CD8-positive, alpha-beta T cell (primary cell): ENCODE measurements at regions of chr6 and their contacts with region 1.

Region 1: DNA sequence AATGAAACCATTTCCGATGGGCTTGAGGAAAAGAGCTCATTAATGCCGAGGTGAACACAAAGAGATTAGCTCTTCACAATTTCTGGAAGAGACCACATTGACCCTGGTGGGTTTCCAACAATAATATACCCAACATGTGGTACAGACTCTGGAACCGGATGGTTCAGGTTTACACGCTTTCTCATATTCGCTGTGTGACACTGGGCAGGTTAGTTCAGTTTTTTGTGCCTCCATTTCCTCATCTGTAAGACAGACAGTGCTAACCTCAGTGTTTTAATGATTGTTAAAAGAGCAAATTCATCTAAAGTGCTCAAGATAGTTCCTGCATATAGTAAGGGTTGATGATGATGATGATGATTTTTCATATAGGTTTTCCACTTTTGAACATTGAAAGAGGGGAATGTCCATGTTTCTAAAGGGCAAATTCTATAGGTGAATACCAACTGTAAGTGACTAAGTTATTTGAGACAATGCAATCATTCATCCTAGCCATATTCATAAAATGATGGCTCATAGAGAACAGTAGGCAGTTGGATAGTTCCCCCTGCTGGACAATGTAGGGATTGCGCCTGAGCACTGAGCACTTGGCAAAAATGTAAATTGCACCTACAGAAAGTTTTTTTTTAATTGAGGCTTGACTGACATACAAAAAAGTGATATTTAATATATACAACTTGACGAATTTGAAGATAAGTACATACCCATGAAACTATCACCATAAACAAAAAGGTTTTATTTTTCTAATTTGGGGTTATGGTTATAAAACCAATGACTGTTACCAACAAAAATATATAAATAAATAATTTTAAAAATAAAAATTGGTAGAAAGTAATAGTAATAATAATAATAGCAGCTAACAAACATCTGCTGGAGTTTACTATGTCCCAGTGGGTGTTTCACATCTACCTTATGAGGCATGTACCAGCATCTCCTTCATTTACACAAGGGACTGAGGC is 2.1 kb upstream of the PERP start:
- DNase-seq: peak; percentile 61 to 85 (median 81)
- ATAC-seq: peak; percentile 71
- H3K4me3 ChIP-seq: no peak overlapping the region
- H3K4me3 Mint-ChIP-seq: no peak overlapping the region
- H3K27ac ChIP-seq: no peak overlapping the region
- H3K27ac Mint-ChIP-seq: no peak overlapping the region
- H3K4me1 ChIP-seq: peaks cover 9% of the 10 kb centered on the region
- H3K4me1 Mint-ChIP-seq: peaks cover 18% of the 10 kb centered on the region
- H3K27me3 ChIP-seq: peaks cover 5 to 7% of the 10 kb centered on the region in 2 experiments
- H3K27me3 Mint-ChIP-seq: peaks cover 25% of the 10 kb centered on the region
- CTCF ChIP-seq: peak; percentile 92

Region 2: DNA sequence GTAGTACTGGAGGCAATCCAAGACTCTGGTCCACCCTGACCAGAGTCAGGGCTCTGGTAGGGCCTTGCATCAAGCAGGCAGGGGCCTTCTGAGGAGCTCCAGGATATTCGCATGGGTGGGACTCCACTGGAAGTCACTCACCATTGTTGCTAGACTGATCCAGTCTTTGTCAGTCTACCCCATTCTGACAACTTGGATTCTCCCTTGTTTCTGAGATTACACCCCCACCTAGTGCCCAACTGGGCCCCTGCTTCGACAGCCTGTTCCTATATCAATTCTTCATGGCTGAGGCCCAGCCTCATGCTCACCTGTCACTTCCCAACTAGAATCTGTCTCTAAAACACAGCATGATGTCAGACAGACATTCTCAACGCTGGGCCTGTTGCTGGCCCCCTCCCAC is 1182.0 kb before region 1 on chr6:
- CTCF ChIA-PET with region 1: no interaction called
- POLR2A ChIA-PET with region 1: no interaction called
- intact Hi-C with region 1: no loop called
- DNase-seq: peak in 3 of 9 experiments; percentile 5 to 31 (median 23)
- ATAC-seq: peak; percentile 46
- H3K4me3 ChIP-seq: no peak overlapping the region
- H3K4me3 Mint-ChIP-seq: no peak overlapping the region
- H3K27ac ChIP-seq: no peak overlapping the region
- H3K27ac Mint-ChIP-seq: no peak overlapping the region
- H3K4me1 ChIP-seq: peaks cover 9% of the 10 kb centered on the region
- H3K4me1 Mint-ChIP-seq: peaks cover 17% of the 10 kb centered on the region
- H3K27me3 ChIP-seq: peaks cover 9 to 13% of the 10 kb centered on the region in 2 experiments
- H3K27me3 Mint-ChIP-seq: peaks cover 39% of the 10 kb centered on the region
- CTCF ChIP-seq: no peak

Region 3: DNA sequence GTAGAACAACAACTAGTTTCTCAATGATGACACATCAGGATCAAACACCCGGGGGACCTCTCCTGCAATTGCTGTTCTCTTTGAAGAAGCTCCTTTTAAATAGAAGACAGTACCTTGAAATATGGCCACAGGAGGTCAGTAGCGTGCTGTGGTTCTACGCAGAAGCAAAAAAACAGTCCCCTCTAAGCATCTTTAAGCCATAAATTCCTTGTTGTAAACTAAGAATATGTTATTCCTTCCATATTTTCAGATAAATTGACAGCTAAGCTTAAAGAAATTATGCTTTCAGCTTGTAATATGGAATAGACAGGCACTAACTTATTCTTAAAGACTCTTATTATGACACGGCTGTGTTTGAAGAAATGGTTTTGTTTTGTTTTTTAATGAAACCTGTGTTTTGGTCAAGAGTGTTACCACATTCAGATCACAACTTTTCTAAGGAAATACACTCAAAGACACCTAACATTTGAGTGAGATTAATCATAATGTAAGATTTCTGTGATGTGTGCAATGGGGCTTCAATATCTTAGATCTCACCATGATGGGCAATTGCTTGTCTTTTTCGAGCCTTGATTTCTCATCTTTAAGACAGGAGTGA is 1014.8 kb before region 1 on chr6:
- CTCF ChIA-PET with region 1: no interaction called
- POLR2A ChIA-PET with region 1: no interaction called
- intact Hi-C with region 1: loop called in 1 of 2 experiments (anchors 10 kb)
- DNase-seq: peak; percentile 14 to 79 (median 54)
- ATAC-seq: peak; percentile 67
- H3K4me3 ChIP-seq: no peak overlapping the region
- H3K4me3 Mint-ChIP-seq: no peak overlapping the region
- H3K27ac ChIP-seq: no peak overlapping the region
- H3K27ac Mint-ChIP-seq: peak overlapping the region; percentile 37
- H3K4me1 ChIP-seq: no peaks in the 10 kb centered on the region
- H3K4me1 Mint-ChIP-seq: peaks cover 18% of the 10 kb centered on the region
- H3K27me3 ChIP-seq: no peaks in the 10 kb centered on the region
- H3K27me3 Mint-ChIP-seq: peaks cover 3% of the 10 kb centered on the region
- CTCF ChIP-seq: peak; percentile 71

Region 4: DNA sequence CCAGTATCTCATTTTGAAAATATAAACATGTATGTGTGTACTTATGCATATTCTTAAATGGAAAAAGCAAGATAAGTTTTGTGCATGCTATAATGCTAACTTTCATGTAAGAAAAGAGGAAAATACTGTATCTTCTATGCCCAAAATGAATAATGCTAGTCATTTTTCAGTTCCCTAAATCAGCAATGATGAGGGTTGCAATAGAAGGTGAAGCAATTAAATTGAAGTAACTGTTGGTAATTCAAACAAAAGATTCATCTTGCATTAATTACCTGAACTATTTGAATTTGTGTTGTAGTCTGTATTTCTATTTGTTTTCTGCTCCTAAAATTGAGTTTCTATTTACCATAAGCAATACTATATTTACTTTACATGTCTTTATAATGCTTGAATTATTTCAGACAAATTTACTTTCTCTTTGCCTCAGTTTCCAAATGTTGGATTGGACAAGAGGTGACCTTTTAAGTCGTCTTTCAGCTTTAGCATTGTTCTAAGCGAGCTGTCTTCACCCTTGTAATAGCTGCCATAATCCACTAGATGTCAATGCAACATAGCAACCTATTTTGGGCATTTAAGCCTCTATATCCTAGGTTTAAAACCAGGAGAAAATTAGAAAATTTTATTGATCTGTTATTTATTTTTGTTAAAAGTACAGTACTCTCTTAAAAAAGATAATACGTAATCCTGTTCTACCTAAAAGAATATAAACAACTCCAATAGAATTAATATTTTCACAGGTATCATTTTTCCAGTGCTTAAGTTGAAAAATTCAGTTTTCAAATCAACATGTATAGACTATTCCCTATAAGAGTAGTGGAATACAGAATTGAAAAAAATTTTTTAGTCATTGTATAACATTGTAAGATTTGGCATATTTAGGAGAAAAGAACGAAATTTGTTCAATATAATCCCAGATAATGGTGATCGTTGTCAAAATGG is 837.8 kb before region 1 on chr6:
- CTCF ChIA-PET with region 1: no interaction called
- POLR2A ChIA-PET with region 1: no interaction called
- intact Hi-C with region 1: loop called in 1 of 2 experiments (anchors 5 kb)
- DNase-seq: peak in 2 of 9 experiments; percentile 56 to 66
- ATAC-seq: peak; percentile 69
- H3K4me3 ChIP-seq: no peak overlapping the region
- H3K4me3 Mint-ChIP-seq: no peak overlapping the region
- H3K27ac ChIP-seq: no peak overlapping the region
- H3K27ac Mint-ChIP-seq: no peak overlapping the region
- H3K4me1 ChIP-seq: no peaks in the 10 kb centered on the region
- H3K4me1 Mint-ChIP-seq: peaks cover 17% of the 10 kb centered on the region
- H3K27me3 ChIP-seq: no peaks in the 10 kb centered on the region
- H3K27me3 Mint-ChIP-seq: peaks cover 2% of the 10 kb centered on the region
- CTCF ChIP-seq: peak; percentile 95

Region 5: GRCh38 chr6:138001750-138002349 is 107.5 kb before region 1 on chr6:
- CTCF ChIA-PET with region 1: interaction called, 46 read pairs
- POLR2A ChIA-PET with region 1: interaction called, 3 read pairs
- intact Hi-C with region 1: loop called (anchors 1 kb)
- DNase-seq: peak; percentile 39 to 75 (median 68)
- ATAC-seq: peak; percentile 54
- H3K4me3 ChIP-seq: no peak overlapping the region
- H3K4me3 Mint-ChIP-seq: no peak overlapping the region
- H3K27ac ChIP-seq: no peak overlapping the region
- H3K27ac Mint-ChIP-seq: no peak overlapping the region
- H3K4me1 ChIP-seq: no peaks in the 10 kb centered on the region
- H3K4me1 Mint-ChIP-seq: peaks cover 8% of the 10 kb centered on the region
- H3K27me3 ChIP-seq: no peaks in the 10 kb centered on the region
- H3K27me3 Mint-ChIP-seq: no peaks in the 10 kb centered on the region
- CTCF ChIP-seq: peak; percentile 88

Region 6: DNA sequence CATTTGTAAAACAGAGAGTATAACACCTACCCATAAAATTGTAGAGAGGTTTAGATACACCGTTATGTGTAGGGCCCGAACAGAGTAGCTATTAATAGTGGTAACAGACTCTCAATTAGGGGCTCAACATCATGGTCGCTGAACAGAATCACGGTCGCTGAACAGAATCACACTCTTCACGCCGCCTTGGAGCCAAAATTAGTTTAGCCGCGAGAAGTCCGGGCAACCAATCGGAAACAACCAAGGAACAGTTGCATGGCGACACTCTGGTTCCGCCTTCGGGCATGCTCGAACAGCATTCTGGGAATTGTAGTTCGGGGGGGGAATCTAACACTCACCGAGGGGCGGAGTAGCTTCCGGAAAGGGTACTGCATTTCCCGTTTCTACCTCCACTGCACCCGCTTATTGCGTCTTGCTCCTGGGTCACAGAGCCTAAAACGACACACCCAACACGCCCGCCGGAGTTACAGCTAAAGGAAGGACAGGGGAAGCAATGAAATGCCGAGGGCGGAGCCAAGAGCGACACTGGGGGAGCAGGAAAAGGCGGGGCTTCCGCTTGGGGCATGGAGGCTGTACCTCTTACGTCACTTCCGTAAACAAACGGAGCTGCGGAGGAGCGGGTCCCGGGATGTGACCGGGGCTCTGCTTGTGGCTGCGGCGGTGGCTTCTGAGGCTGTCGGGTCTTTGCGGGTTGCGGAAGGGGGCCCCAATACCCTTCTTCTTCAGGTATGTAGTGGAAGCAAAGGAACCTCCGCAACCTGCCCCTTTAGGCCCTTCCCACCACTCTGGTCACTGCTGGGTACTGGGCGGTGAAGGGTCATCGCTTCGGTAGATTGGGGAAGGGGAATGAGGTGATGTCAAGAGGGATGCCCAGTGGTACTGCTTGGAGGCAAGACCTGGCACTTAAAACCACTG is 664.1 kb after region 1 on chr6 and contains the start of gene CCDC28A:
- CTCF ChIA-PET with region 1: no interaction called
- POLR2A ChIA-PET with region 1: no interaction called
- intact Hi-C with region 1: loop called in 1 of 2 experiments (anchors 5 kb)
- DNase-seq: peak; percentile 87 to 97 (median 92)
- ATAC-seq: peak; percentile 84
- H3K4me3 ChIP-seq: peak within 1 kb of the TSS; percentile 68 to 90
- H3K4me3 Mint-ChIP-seq: peak within 1 kb of the TSS; percentile 100
- H3K27ac ChIP-seq: peak within 1 kb of the TSS; percentile 88 to 96
- H3K27ac Mint-ChIP-seq: peak within 1 kb of the TSS; percentile 100
- H3K4me1 ChIP-seq: peaks cover 19% of the 10 kb centered on the region
- H3K4me1 Mint-ChIP-seq: peaks cover 33% of the 10 kb centered on the region
- H3K27me3 ChIP-seq: no peaks in the 10 kb centered on the region
- H3K27me3 Mint-ChIP-seq: no peaks in the 10 kb centered on the region
- CTCF ChIP-seq: no peak
- total RNA-seq, gene CCDC28A: 38.2 to 39.4 TPM